K562 (cell line): ENCODE measurements at regions of chr21 and their contacts with region 1.

Region 1: DNA sequence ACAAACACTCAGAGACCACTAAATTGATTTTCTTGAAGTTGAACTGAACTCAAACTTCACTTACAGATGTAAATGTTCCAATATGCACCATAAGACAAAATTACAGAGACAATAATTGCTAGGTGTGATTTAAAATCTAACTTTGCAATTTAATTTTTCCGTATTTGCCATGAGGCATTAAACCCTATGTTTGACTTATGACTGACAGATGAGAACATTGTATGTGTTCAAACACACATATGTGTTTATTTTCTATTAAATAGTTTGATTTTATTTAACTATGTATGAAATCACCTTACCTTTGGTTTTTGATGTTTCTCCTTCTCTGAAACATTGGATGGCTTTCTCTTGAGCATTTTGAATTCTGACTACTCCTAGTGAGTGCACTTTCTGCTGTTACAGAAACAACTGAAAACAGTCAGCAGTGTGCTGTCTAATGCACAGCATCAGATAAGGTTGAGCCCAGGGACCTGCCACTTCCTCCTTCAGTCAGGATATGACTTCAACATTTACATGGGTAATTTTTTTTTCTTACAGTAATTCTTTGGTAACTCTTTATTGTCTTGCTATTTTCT is at the start of gene SAMSN1:
- DNase-seq: peak; percentile 52 to 91 (median 74)
- ATAC-seq: peak; percentile 83
- H3K4me3 ChIP-seq: peak within 1 kb of the TSS; percentile 56
- H3K27ac ChIP-seq: peak within 1 kb of the TSS; percentile 76
- H3K4me1 ChIP-seq: peaks cover 0 to 13% of the 10 kb centered on the region in 2 experiments; a peak in 2 of 5 replicates
- H3K27me3 ChIP-seq: no peaks in the 10 kb centered on the region
- CTCF ChIP-seq: no peak
- EP300 ChIP-seq: peak; percentile 88
- POLR2A ChIP-seq: peak; percentile 94
- RAD21 ChIP-seq: peak in 1 of 2 experiments; percentile 37; a peak in 2 of 4 replicates
- polyA plus RNA-seq, gene SAMSN1: 184 to 223 TPM

Region 2: GRCh38 chr21:14454016-14455009 is 91.7 kb before region 1 on chr21:
- CTCF ChIA-PET with region 1: no interaction called
- POLR2A ChIA-PET with region 1: no interaction called
- in situ Hi-C with region 1: no loop called
- intact Hi-C with region 1: loop called (anchors 2 kb)
- DNase-seq: peak; percentile 80 to 93 (median 83)
- ATAC-seq: peak; percentile 69
- H3K4me3 ChIP-seq: no peak overlapping the region
- H3K27ac ChIP-seq: peak overlapping the region; percentile 91
- H3K4me1 ChIP-seq: peaks cover 17 to 54% of the 10 kb centered on the region in 2 experiments
- H3K27me3 ChIP-seq: no peaks in the 10 kb centered on the region
- CTCF ChIP-seq: no peak
- EP300 ChIP-seq: peak; percentile 98
- POLR2A ChIP-seq: no peak
- RAD21 ChIP-seq: peak; percentile 3 to 15; a peak in 2 of 4 replicates

Region 3: DNA sequence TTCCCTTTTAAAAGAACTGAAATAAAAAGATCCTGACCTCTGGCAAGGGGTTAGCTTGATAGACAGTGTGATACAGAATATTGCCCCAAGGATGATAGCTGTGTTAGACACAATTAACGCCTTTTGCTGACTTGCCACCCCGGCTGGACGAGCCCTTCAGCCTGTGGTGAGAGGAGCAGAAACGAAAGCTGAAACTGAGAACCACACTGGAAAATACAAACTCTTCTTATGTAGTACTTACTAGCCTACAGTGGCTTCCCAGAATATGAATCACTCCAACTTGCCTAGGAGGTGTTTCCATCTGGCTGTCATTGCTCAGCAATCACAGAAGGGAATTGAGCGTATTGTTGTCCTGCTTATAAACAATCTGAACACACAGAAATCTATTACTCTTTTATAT is 22.8 kb before region 1 on chr21:
- CTCF ChIA-PET with region 1: no interaction called
- POLR2A ChIA-PET with region 1: no interaction called
- in situ Hi-C with region 1: no loop called
- intact Hi-C with region 1: loop called (anchors 1 kb)
- DNase-seq: peak in 1 of 4 experiments; percentile 28
- ATAC-seq: no peak
- H3K4me3 ChIP-seq: no peak overlapping the region
- H3K27ac ChIP-seq: no peak overlapping the region
- H3K4me1 ChIP-seq: peaks cover 4 to 16% of the 10 kb centered on the region in 2 experiments; a peak in 4 of 5 replicates
- H3K27me3 ChIP-seq: no peaks in the 10 kb centered on the region
- CTCF ChIP-seq: no peak
- EP300 ChIP-seq: no peak
- POLR2A ChIP-seq: no peak
- RAD21 ChIP-seq: no peak

Region 4: DNA sequence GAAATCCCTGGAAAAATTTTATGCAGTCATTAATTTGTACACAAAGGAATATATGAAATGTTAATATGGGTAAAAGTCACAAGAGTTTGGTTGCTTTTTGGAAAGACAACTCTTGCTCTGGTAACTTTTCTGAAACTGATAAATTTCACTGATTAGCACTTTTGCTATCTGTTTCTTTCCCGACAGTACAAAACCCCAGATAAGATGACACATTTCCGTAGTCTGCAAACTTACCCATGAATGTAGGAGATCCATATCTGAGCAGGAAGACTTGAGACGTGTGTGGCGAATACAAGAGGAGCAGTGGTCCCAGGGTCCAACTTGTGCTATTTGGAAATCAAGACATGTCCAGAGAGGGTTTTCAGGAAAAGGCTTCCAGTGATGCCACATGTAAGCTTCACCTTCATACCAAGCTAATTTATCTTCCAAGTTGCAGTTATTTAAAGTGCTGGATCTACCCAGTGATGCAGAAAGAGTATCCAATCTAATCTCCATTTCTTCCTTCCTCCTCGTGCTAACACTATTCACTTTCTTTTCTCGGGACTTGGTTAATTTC is 36.0 kb after region 1 on chr21:
- CTCF ChIA-PET with region 1: no interaction called
- POLR2A ChIA-PET with region 1: interaction called, 3 read pairs
- in situ Hi-C with region 1: no loop called
- intact Hi-C with region 1: loop called (anchors 2 kb)
- DNase-seq: peak in 2 of 4 experiments; percentile 36 to 80
- ATAC-seq: peak; percentile 66
- H3K4me3 ChIP-seq: peak overlapping the region; percentile 19
- H3K27ac ChIP-seq: peak overlapping the region; percentile 91
- H3K4me1 ChIP-seq: peaks cover 0 to 25% of the 10 kb centered on the region in 2 experiments; a peak in 3 of 5 replicates
- H3K27me3 ChIP-seq: no peaks in the 10 kb centered on the region
- CTCF ChIP-seq: no peak
- EP300 ChIP-seq: peak; percentile 95
- POLR2A ChIP-seq: peak; percentile 55
- RAD21 ChIP-seq: no peak; a peak in 1 of 4 replicates

Region 5: GRCh38 chr21:14602382-14602958 is 56.5 kb after region 1 on chr21:
- CTCF ChIA-PET with region 1: no interaction called
- POLR2A ChIA-PET with region 1: no interaction called
- in situ Hi-C with region 1: no loop called
- intact Hi-C with region 1: loop called (anchors 5 kb)
- DNase-seq: peak in 1 of 4 experiments; percentile 32
- ATAC-seq: peak; percentile 46
- H3K4me3 ChIP-seq: no peak overlapping the region
- H3K27ac ChIP-seq: peak overlapping the region; percentile 39; the same call in 2 of the 3 replicates
- H3K4me1 ChIP-seq: peaks cover 7 to 41% of the 10 kb centered on the region in 2 experiments; a peak in 4 of 5 replicates
- H3K27me3 ChIP-seq: no peaks in the 10 kb centered on the region
- CTCF ChIP-seq: no peak
- EP300 ChIP-seq: no peak
- POLR2A ChIP-seq: no peak
- RAD21 ChIP-seq: no peak

Region 6: DNA sequence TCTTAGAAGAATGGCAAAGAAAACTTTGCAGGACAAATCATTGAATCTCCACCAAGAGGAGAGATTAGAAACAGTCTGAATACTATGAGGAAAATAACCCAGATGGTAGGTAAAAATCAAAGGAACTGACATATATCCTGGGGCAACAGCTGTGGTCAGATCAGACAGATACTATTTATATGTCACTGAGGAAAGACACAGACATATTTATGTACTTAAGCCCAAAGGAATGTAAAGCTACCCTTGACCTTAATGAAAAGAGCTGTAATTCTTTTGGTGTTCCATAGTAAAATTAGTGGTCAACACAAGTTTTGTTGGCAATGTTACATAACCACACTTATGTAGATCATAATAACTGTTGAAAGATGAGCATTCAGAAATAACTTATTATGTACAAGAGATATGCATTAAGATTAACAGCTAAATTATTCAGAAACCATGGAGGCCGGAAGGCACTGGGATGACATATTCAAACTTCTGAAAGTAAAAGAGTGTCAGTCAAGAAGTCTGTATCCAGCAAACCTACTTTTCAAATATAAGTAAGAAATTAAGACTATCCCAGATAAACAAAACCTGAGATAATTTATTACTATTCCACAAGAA is 166.2 kb after region 1 on chr21:
- CTCF ChIA-PET with region 1: no interaction called
- POLR2A ChIA-PET with region 1: no interaction called
- in situ Hi-C with region 1: no loop called
- intact Hi-C with region 1: no loop called
- DNase-seq: no peak
- ATAC-seq: no peak
- H3K4me3 ChIP-seq: no peak overlapping the region
- H3K27ac ChIP-seq: no peak overlapping the region
- H3K4me1 ChIP-seq: peaks cover 0 to 18% of the 10 kb centered on the region in 2 experiments; a peak in 3 of 5 replicates
- H3K27me3 ChIP-seq: no peaks in the 10 kb centered on the region
- CTCF ChIP-seq: no peak
- EP300 ChIP-seq: no peak
- POLR2A ChIP-seq: no peak
- RAD21 ChIP-seq: no peak

Region 7: DNA sequence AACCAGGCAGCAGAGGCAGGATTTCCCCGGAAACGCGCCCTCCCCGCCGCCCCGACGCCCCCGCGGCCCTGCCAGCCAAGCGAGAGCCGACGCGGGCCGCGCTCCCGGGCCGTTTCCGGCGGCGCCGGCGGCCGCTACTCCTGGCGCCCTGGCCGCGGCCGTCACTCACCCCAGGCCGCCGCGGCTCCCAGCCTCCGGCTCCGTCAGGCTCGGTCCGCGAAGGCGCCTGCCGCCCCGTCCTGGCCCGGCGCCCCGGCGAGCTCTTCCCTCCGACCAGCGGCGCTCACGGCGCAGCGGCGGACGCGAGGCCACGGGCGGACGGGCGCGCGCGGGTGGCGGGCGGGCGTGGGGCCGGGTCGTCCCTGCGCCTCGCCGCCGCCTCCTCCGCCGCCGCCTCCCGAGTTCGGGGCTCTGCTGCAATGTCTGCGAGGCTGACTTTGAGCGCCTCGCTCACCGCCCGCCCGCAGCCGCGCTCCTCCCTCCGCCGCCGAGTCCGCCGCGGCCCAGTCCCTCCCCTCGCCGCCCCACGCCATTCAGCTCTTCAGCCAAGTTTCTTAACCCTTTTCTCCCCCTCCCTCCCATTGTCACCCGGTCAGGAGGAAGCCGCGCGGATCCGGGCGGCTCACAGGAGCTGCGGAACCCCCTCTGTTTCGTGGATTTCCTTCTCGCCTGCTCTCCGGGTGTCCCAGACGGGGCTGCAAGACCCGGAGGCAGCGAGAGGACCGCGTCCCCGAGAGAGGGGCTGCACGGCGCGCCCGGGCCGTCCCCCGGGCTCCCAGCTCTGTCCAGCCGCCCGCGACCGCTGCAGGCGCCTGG is 518.8 kb after region 1 on chr21 and contains the start of gene NRIP1:
- CTCF ChIA-PET with region 1: no interaction called
- POLR2A ChIA-PET with region 1: no interaction called
- in situ Hi-C with region 1: no loop called
- intact Hi-C with region 1: loop called (anchors 5 kb)
- DNase-seq: peak; percentile 77 to 91 (median 83)
- ATAC-seq: peak; percentile 81
- H3K4me3 ChIP-seq: peak within 1 kb of the TSS; percentile 80
- H3K27ac ChIP-seq: peak within 1 kb of the TSS; percentile 85
- H3K4me1 ChIP-seq: peaks cover 12% of the 10 kb centered on the region in 2 experiments; a peak in 4 of 5 replicates
- H3K27me3 ChIP-seq: no peaks in the 10 kb centered on the region
- CTCF ChIP-seq: no peak
- EP300 ChIP-seq: no peak
- POLR2A ChIP-seq: peak; percentile 61
- RAD21 ChIP-seq: no peak
- polyA plus RNA-seq, gene NRIP1: 4.3 to 6.3 TPM